ENCODE measurements at regions of chr6 and their contacts with region 1.

Region 1: DNA sequence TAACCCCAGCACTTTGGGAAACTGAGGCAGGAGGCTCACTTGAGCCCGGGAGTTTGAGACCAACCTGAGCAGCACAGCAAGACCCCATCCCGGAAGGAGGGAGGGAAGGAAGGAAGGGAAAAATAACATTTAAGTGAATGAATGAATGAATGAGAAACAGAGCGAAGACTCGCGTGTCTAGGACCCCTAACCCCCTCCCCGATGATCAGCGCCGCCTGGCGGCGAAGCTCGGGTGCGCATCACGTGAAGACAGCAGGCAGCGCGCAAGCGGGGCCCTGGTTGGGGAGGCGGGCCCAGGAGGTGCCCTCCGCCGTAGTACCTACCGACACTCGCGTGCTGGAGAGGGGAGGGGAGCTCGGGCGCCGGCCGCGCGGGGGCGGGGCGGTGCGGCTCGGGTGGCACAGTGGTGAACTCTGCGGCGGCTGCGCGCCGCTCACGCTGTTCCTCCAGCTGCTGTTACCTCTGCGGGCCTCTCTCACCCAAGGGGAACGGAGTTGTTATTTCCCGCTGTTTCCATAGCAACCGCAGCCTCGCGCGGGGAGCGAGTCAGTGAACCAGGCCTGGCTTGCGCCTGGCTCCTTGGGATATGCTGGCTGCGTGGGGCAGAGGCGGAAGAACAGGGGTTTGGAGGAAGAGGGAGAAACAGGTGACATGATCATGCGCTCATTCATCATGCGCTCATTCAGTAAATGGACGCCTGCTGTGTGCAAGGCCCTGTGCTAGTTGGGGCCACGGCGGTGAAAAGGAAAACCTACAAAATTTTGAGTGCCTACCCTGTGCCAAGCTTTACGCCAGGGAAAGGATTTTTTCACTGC is 2.0 kb upstream of the DCDC2 start:
- DNase-seq: peak; percentile 54
- ATAC-seq: peak; percentile 94
- H3K4me3 ChIP-seq: peak overlapping the region; percentile 48 to 61
- H3K27ac ChIP-seq: 0 out of 2 replicates have a peak overlapping the region, but pooled peaks have one; percentile 36
- H3K4me1 ChIP-seq: 0 out of 2 replicates have a peak, but pooled peaks cover 2% of the 10 kb centered on the region
- H3K27me3 ChIP-seq: peaks cover 14% of the 10 kb centered on the region
- CTCF ChIP-seq: peak; percentile 95

Region 2: DNA sequence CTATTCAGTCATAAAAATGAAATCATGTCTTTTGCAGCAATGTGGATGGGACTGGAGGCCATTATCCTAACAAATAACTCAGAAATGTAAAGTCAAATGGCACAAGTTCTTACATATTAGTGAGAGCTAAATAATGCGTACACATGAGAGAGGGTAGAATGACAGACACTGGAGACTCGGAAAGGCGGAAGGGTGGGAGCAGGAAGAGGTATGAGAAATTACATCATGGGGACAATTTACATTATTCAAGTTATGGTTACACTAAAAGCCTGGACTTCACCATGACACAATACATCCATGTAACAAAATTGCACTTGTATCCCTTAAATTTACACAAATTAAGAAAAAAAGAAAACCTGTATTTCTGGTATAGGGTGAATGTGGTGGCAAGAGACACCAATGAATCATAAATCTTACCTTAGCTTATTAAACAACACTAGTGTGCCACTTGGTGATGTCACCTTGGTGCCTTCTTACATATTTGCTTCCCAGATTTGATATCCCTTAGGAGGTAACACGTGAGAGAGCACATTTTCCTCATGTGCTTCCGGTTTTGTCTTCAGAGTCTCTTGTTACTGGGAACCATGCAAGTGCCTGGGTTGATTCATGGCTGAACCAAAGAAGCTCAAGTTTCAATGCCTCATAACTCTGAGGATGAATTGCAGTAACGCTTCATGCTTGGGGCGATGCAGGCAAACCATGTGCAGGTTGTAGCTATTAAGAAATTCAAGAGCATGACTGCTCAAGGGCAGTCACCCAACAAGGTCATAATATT is 86.6 kb before region 1 on chr6:
- CTCF ChIA-PET with region 1: no interaction called
- POLR2A ChIA-PET with region 1: no interaction called
- in situ Hi-C with region 1: no loop called
- intact Hi-C with region 1: no loop called
- DNase-seq: no peak
- ATAC-seq: no peak
- H3K4me3 ChIP-seq: no peak overlapping the region
- H3K27ac ChIP-seq: no peak overlapping the region
- H3K4me1 ChIP-seq: no peaks in the 10 kb centered on the region
- H3K27me3 ChIP-seq: peaks cover 2% of the 10 kb centered on the region; the same call in 1 of the 2 replicates
- CTCF ChIP-seq: no peak

Region 3: DNA sequence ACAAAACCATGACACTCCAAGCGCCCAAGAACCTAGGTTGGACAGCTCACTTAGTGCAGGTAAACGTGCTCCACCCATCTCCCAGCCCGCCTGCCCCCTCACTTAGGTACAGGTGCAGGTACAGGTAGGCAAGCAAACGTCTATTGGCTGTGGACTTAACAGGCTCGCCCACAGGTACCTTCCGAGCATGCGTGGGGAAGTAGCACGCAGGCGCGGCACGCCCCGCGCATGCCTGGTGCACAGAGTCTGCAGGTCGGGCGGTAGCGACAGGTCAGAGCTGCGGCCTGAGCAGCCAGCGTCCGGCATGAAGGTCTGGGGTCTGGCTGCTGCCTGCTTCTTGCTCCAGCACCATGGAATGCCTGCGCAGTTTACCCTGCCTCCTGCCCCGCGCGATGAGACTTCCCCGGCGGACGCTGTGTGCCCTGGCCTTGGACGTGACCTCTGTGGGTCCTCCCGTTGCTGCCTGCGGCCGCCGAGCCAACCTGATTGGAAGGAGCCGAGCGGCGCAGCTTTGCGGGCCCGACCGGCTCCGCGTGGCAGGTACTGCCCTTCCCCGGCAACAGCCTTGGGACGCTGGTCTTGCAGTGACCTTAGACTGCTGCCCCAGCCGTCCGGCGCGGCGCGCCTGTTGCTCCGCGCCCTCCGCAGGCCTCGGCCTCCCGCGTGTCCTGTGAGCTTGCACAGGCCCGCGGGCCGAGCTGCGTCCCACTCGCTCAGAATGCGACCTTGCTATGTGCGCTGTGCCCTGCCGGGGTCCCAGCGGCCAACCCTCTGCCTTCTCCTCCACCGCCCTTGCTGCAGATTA is 43.1 kb after region 1 on chr6 and contains the start of gene MRS2:
- CTCF ChIA-PET with region 1: no interaction called
- POLR2A ChIA-PET with region 1: no interaction called
- in situ Hi-C with region 1: no loop called
- intact Hi-C with region 1: loop called (anchors 2 kb)
- DNase-seq: no peak
- ATAC-seq: peak; percentile 100
- H3K4me3 ChIP-seq: peak within 1 kb of the TSS; percentile 69 to 95
- H3K27ac ChIP-seq: peak within 1 kb of the TSS; percentile 68
- H3K4me1 ChIP-seq: peaks cover 14% of the 10 kb centered on the region
- H3K27me3 ChIP-seq: no peaks in the 10 kb centered on the region
- CTCF ChIP-seq: no peak
- total RNA-seq, gene MRS2: 26.0 TPM

Measured in Panc1 (cell line).